Activated CD8-positive, alpha-beta memory T cell treated with anti-CD3 and anti-CD28 coated beads, Interleukin-2, amount 10 ng/mL, durations not matched to agents 7 days and 5 days (primary cell): ENCODE measurements at regions of chr17 and their contacts with region 1.

Region 1: DNA sequence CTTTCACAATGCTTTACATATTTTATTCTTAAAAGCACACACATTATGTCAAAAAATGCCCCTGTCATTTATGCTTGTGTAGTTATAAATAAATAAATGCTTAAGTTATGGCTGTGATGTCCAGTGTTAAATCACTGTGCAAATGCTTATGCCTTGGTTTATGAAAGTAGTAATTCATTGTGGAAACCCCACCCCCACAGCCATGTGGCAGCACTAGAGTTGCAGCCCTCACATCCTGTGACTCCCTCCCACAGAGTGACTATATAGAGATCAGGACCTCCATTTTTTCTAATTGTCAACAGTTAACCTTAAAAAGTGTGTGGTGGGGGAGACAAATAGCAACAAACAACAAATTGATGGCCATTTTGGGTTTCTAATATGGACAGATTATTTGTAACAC is 2.4 kb downstream of the SKAP1 start:
- DNase-seq: peak; percentile 88
- ATAC-seq: peak; percentile 77
- H3K4me3 Mint-ChIP-seq: peak overlapping the region; percentile 82
- H3K27ac Mint-ChIP-seq: peak overlapping the region; percentile 86
- H3K4me1 Mint-ChIP-seq: peaks cover 56% of the 10 kb centered on the region
- H3K27me3 Mint-ChIP-seq: no peaks in the 10 kb centered on the region

Region 2: GRCh38 chr17:48441231-48441711 is 13.7 kb after region 1 on chr17:
- CTCF ChIA-PET with region 1: interaction called, 26 read pairs
- DNase-seq: peak; percentile 72
- ATAC-seq: peak; percentile 71
- H3K4me3 Mint-ChIP-seq: peak overlapping the region; percentile 52
- H3K27ac Mint-ChIP-seq: peak overlapping the region; percentile 98
- H3K4me1 Mint-ChIP-seq: peaks cover 90% of the 10 kb centered on the region
- H3K27me3 Mint-ChIP-seq: no peaks in the 10 kb centered on the region